ENCODE measurements at regions of chr1 and their contacts with region 1.

Region 1: DNA sequence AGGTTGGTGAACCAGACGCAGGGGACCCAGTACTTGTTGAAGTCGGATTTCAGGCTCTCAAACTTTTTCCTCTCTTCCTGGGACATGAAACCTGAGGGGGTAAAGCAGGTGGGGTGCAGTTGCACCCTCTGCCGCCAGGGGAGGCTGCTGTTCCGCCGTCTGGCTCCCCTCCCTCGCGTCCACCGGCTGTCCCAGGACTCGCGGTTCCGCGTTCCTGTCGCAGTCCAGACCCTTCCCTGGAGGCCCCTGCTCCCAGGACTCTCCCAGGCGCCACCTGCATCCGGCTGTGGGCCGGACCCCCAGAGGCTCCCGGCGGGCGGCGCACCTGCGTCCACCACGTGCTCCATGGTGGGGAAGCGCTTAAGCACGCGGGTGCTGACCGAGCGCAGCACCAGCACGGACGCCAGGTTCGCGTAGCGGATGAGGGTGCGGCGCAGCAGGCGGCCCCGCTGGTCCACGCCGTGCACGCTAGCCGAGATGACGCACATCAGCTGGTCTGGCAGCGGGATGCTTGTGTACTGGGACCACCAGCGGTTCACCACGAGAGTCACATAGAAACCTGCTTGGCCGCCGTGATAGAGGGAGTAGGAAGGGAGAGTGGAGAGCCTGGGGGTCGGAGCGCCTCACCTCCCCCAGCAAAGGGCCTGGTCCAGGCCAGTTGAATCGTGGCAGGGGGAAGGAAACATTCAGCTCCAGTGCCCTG is 1.7 kb downstream of the BEST4 start:
- DNase-seq: peak; percentile 84
- H3K4me3 Mint-ChIP-seq: peak overlapping the region; percentile 68
- H3K27ac Mint-ChIP-seq: peak overlapping the region; percentile 45
- H3K4me1 Mint-ChIP-seq: peaks cover 40% of the 10 kb centered on the region
- H3K27me3 Mint-ChIP-seq: peaks cover 25% of the 10 kb centered on the region

Region 2: DNA sequence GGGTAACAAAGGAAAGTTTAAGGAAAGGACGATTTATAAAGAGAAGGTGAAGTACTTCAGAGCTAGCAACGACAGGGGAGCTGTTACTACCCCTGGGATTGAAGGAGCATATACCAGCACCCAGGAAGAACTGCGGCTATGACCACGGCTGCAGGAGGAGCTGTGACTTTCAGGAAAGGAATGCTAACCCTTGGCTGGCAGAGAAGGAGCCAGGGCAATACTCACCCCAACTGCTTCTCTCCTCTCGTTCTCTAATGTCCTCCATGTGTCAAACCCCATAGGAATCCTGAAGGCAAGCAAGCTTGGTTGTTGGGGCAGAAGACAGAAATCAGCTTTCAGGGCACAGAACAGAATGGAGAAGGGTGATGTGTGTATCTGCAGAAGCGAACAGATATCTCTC is 232.5 kb before region 1 on chr1:
- CTCF ChIA-PET with region 1: no interaction called
- DNase-seq: no peak
- H3K4me3 Mint-ChIP-seq: no peak overlapping the region
- H3K27ac Mint-ChIP-seq: no peak overlapping the region
- H3K4me1 Mint-ChIP-seq: no peaks in the 10 kb centered on the region
- H3K27me3 Mint-ChIP-seq: peaks cover 29% of the 10 kb centered on the region

Region 3: GRCh38 chr1:44730741-44731512 is 55.4 kb before region 1 on chr1 and contains the start of gene RNU5D-1:
- CTCF ChIA-PET with region 1: interaction called, 13 read pairs
- DNase-seq: peak; percentile 97
- H3K4me3 Mint-ChIP-seq: peak within 1 kb of the TSS; percentile 54
- H3K27ac Mint-ChIP-seq: peak within 1 kb of the TSS; percentile 99
- H3K4me1 Mint-ChIP-seq: peaks cover 48% of the 10 kb centered on the region
- H3K27me3 Mint-ChIP-seq: no peaks in the 10 kb centered on the region

Region 4: DNA sequence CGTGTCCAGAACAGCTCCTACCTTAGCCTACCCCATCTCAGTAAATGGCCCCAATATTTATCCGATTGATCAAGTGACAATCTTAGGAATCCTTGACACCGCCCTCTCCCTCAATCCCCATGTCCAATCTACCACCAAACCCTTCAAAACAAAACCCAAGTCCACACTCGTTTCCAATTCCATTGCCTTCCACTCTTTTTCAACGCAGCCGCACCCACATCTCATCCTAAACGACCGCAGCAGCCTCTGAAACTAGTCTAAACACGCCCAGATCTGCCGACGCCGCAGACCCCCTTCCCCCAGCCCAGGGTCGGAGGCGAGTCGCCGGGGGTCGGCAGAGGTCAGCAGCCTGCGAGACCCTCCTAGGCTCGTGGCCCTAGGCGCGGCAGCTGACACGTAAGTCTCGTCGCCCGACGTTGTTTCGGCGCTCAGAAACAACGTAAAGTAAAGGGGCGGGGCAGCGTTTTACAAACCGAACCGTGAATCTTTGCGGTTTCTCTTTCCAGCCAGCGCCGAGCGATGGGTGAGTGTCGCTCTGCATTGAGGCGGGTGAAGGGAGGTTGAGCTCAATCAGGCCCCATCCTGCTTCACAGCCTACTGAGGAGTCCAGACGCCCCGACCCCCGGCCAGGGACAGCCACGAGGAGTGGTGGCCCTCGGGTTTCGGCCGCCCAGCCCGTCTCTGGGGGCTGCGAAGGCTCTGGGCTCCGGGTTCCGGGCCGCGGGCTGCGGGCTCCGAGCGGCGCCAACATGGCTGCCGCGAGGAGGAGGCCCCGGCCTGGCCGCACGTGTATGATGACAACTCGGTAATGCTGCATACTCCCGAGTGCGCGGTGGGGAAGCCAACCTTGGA is 11.0 kb before region 1 on chr1 and contains the start of gene RPS8:
- CTCF ChIA-PET with region 1: interaction called, 13 read pairs
- DNase-seq: peak; percentile 93
- H3K4me3 Mint-ChIP-seq: peak within 1 kb of the TSS; percentile 88
- H3K27ac Mint-ChIP-seq: peak within 1 kb of the TSS; percentile 97
- H3K4me1 Mint-ChIP-seq: peaks cover 49% of the 10 kb centered on the region
- H3K27me3 Mint-ChIP-seq: no peaks in the 10 kb centered on the region